Mammary epithelial cell (primary cell): ENCODE measurements at regions of chr12 and their contacts with region 1.

Region 1: GRCh38 chr12:106136263-106136662 is 2.5 kb downstream of the NUAK1 start:
- DNase-seq: peak; percentile 77
- H3K4me3 ChIP-seq: peak overlapping the region; percentile 11 to 77 (median 24)
- H3K27ac ChIP-seq: peak overlapping the region; percentile 69
- H3K4me1 ChIP-seq: peaks cover 64% of the 10 kb centered on the region
- H3K27me3 ChIP-seq: no peaks in the 10 kb centered on the region
- CTCF ChIP-seq: peak; percentile 59 to 77

Region 2: DNA sequence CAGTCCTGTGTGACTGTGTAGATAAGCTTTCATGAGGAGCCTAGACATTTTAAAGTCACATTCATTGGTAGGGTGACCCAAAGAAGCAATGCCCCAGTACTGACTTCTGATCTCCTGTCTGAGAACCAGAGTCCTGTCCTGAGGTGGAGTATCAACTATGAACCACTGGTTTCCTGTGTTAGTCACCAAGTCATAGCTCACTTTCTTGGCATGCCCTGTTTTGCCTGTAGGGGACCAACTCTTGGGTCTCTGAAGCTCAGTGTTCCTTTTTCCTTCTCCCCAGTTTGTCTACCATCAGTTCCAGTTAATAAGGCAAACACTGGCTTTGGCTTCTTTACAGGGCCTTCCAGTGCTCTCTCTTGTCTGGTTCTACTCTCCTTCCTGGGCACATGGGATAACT is 708.4 kb before region 1 on chr12:
- CTCF ChIA-PET with region 1: interaction called, 4 read pairs
- dilution Hi-C with region 1: no loop called
- in situ Hi-C with region 1: loop called (anchors 5 kb)
- intact Hi-C with region 1: no loop called
- DNase-seq: peak; percentile 80
- H3K4me3 ChIP-seq: no peak overlapping the region
- H3K27ac ChIP-seq: no peak overlapping the region
- H3K4me1 ChIP-seq: peaks cover 9% of the 10 kb centered on the region
- H3K27me3 ChIP-seq: no peaks in the 10 kb centered on the region
- CTCF ChIP-seq: peak; percentile 34 to 43

Region 3: GRCh38 chr12:105775343-105775742 is 360.9 kb before region 1 on chr12:
- CTCF ChIA-PET with region 1: no interaction called
- dilution Hi-C with region 1: no loop called
- in situ Hi-C with region 1: loop called in 1 of 2 experiments (anchors 10 kb)
- intact Hi-C with region 1: loop called (anchors 5 kb)
- DNase-seq: peak; percentile 43
- H3K4me3 ChIP-seq: no peak overlapping the region
- H3K27ac ChIP-seq: no peak overlapping the region
- H3K4me1 ChIP-seq: no peaks in the 10 kb centered on the region
- H3K27me3 ChIP-seq: no peaks in the 10 kb centered on the region
- CTCF ChIP-seq: peak in 1 of 2 donors; percentile 48

Region 4: GRCh38 chr12:105935981-105936380 is 200.3 kb before region 1 on chr12:
- CTCF ChIA-PET with region 1: no interaction called
- dilution Hi-C with region 1: no loop called
- in situ Hi-C with region 1: no loop called
- intact Hi-C with region 1: no loop called
- DNase-seq: peak; percentile 71
- H3K4me3 ChIP-seq: no peak overlapping the region
- H3K27ac ChIP-seq: peak overlapping the region; percentile 78
- H3K4me1 ChIP-seq: peaks cover 86% of the 10 kb centered on the region
- H3K27me3 ChIP-seq: no peaks in the 10 kb centered on the region
- CTCF ChIP-seq: no peak

Region 5: GRCh38 chr12:105954951-105955931 is 181.0 kb before region 1 on chr12:
- CTCF ChIA-PET with region 1: no interaction called
- dilution Hi-C with region 1: loop called (anchors 10 kb)
- in situ Hi-C with region 1: no loop called
- intact Hi-C with region 1: no loop called
- DNase-seq: peak; percentile 69
- H3K4me3 ChIP-seq: no peak overlapping the region
- H3K27ac ChIP-seq: no peak overlapping the region
- H3K4me1 ChIP-seq: peaks cover 14% of the 10 kb centered on the region
- H3K27me3 ChIP-seq: no peaks in the 10 kb centered on the region
- CTCF ChIP-seq: no peak

Region 6: GRCh38 chr12:106078358-106079010 is 57.8 kb before region 1 on chr12:
- CTCF ChIA-PET with region 1: no interaction called
- dilution Hi-C with region 1: no loop called
- in situ Hi-C with region 1: no loop called
- intact Hi-C with region 1: loop called (anchors 5 kb)
- DNase-seq: peak; percentile 73
- H3K4me3 ChIP-seq: no peak overlapping the region
- H3K27ac ChIP-seq: no peak overlapping the region
- H3K4me1 ChIP-seq: peaks cover 10% of the 10 kb centered on the region
- H3K27me3 ChIP-seq: no peaks in the 10 kb centered on the region
- CTCF ChIP-seq: no peak

Region 7: DNA sequence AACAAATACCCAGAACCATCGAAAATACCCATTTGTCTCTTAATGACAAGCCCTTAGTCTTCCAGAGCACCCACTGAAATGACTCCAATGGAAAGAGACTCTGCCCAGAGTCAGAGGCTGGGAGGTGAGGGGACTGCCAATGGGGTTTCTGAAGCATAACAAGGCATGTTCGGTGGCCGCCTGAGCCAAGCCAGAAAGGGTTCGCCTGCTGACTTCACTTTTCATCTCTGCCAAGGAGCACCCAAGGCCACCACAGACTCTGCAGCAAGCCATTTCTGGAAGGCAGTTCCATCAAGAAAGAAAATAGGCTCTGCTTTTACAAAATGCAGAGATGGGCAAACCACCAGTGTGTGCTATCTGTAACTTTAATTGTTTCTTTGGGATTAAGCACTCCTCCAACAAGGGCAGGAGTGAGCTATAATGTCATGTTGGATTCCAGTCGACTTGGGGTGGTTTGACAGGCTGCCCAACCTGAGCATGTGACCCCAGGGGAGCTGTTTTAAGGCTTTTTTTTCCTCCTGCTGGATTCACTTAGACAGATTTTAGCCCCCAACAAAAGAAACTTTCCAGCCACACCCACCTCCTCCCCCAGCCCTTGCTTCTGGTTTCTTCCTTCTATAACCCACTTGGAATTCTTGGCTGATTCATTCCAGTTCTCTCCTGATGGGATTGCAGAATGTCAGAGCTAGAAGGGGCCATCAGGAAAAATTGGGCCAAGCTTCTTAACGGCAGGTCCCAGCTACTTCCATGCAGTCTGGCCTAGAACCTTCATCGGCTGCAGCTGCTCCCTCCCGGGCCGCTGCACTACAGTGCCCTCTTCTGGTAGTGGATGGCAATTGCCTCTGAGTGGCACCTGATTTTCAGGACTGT is 87.5 kb after region 1 on chr12:
- CTCF ChIA-PET with region 1: interaction called, 3 read pairs
- dilution Hi-C with region 1: no loop called
- in situ Hi-C with region 1: no loop called
- intact Hi-C with region 1: loop called (anchors 2 kb)
- DNase-seq: peak; percentile 45
- H3K4me3 ChIP-seq: no peak overlapping the region
- H3K27ac ChIP-seq: no peak overlapping the region
- H3K4me1 ChIP-seq: peaks cover 14% of the 10 kb centered on the region
- H3K27me3 ChIP-seq: no peaks in the 10 kb centered on the region
- CTCF ChIP-seq: peak; percentile 94 to 95

Region 8: GRCh38 chr12:106564678-106565329 is 428.5 kb after region 1 on chr12:
- CTCF ChIA-PET with region 1: no interaction called
- dilution Hi-C with region 1: no loop called
- in situ Hi-C with region 1: no loop called
- intact Hi-C with region 1: no loop called
- DNase-seq: peak; percentile 25
- H3K4me3 ChIP-seq: no peak overlapping the region
- H3K27ac ChIP-seq: no peak overlapping the region
- H3K4me1 ChIP-seq: peaks cover 6% of the 10 kb centered on the region
- H3K27me3 ChIP-seq: peaks cover 4% of the 10 kb centered on the region
- CTCF ChIP-seq: no peak